ENCODE measurements at regions of chr5 and their contacts with region 1.

Region 1: DNA sequence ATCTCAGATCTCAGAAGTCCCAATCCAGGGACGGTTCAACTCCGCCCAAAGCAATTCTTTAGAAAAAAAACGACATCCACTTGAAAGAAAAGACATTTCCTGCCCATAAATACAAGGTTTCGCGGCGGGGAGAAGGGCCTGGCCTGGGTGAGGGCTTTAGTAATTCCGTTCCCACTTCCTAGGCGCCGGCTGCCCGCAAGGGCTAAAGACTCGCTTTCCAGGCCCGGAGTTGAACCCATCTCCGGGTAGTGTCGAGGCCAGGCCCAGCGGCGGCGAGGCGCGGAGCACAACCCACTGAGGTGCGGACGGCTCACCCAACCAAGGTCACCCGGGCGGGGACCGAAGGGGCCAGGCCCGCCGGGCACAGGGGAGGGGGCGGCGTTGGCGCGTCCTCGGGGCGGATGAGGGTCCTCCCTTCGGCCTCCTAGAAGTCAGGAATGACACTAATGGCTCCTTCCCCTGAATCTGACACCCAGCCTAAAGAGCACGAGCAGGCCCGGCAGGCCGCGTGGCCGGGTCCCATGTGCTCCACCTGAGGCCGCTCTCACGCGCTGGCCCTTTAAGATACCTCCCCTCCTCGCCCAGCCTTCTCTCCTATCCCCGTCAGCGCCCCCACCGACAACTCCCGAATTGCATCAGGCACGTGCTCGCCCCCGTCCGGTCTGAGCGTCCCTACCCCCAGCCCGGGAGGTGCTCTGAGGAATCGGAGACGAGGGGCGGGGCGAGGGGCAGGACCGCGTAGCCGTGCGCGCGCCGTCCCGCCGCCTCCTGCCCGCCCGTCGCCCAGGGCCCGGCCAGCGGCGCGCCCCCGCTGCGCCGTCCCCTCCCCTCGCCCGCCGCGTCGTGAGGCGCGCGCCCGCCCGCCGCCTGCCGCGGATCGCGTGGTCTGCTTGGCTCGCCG is 467 bp upstream of the LARP1 start:
- DNase-seq: peak; percentile 99
- H3K4me3 ChIP-seq: peak overlapping the region; percentile 4 to 91
- H3K4me3 Mint-ChIP-seq: peak overlapping the region; percentile 85 to 92 (median 87)
- H3K27ac ChIP-seq: peak overlapping the region; percentile 92
- H3K27ac Mint-ChIP-seq: peak overlapping the region; percentile 90 to 99 (median 97)
- H3K4me1 ChIP-seq: peaks cover 32% of the 10 kb centered on the region
- H3K4me1 Mint-ChIP-seq: peaks cover 27 to 55% (median 39%) of the 10 kb centered on the region in 4 donors
- H3K27me3 ChIP-seq: no peaks in the 10 kb centered on the region
- H3K27me3 Mint-ChIP-seq: no peaks in the 10 kb centered on the region

Region 2: DNA sequence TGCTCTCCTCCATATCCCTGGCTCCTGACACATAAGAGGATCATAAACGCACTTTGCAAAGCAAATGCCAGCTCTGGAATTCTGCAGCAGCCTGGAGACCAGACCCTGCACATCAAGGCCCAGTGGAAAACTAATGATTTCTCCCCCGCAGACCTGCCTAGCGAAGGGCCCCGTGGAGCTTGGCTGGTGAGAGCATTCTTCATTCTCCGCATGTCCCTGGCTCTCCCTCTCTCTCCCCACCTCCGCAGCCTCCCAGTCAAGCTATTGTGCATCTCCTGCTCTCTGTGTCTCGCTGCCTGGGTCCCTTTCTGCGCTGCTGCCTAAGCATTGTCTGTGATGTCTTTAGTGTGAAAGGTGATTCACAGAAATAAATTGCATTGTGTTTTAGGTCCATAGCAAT is 1217.5 kb before region 1 on chr5:
- CTCF ChIA-PET with region 1: no interaction called
- POLR2A ChIA-PET with region 1: no interaction called
- intact Hi-C with region 1: no loop called
- DNase-seq: no peak
- H3K4me3 ChIP-seq: no peak overlapping the region
- H3K4me3 Mint-ChIP-seq: no peak overlapping the region
- H3K27ac ChIP-seq: no peak overlapping the region
- H3K27ac Mint-ChIP-seq: no peak overlapping the region
- H3K4me1 ChIP-seq: no peaks in the 10 kb centered on the region
- H3K4me1 Mint-ChIP-seq: no peaks in the 10 kb centered on the region
- H3K27me3 ChIP-seq: no peaks in the 10 kb centered on the region
- H3K27me3 Mint-ChIP-seq: no peaks in the 10 kb centered on the region

Region 3: GRCh38 chr5:154445422-154446182 is 309.1 kb before region 1 on chr5 and contains the start of gene SAP30L:
- CTCF ChIA-PET with region 1: no interaction called
- POLR2A ChIA-PET with region 1: no interaction called
- intact Hi-C with region 1: loop called (anchors 1 kb)
- DNase-seq: peak; percentile 93 to 99 (median 96)
- H3K4me3 ChIP-seq: peak within 1 kb of the TSS; percentile 95 to 99
- H3K4me3 Mint-ChIP-seq: peak within 1 kb of the TSS; percentile 97 to 100 (median 99)
- H3K27ac ChIP-seq: peak within 1 kb of the TSS; percentile 66
- H3K27ac Mint-ChIP-seq: peak within 1 kb of the TSS; percentile 83 to 100 (median 96)
- H3K4me1 ChIP-seq: peaks cover 46% of the 10 kb centered on the region
- H3K4me1 Mint-ChIP-seq: peaks cover 40 to 75% (median 52%) of the 10 kb centered on the region in 4 donors
- H3K27me3 ChIP-seq: no peaks in the 10 kb centered on the region
- H3K27me3 Mint-ChIP-seq: no peaks in the 10 kb centered on the region
- total RNA-seq, gene SAP30L: 36.9 to 47.5 TPM

Region 4: GRCh38 chr5:154575546-154576428 is 178.9 kb before region 1 on chr5:
- CTCF ChIA-PET with region 1: no interaction called
- POLR2A ChIA-PET with region 1: no interaction called
- intact Hi-C with region 1: no loop called
- DNase-seq: no peak
- H3K4me3 ChIP-seq: no peak overlapping the region
- H3K4me3 Mint-ChIP-seq: no peak overlapping the region
- H3K27ac ChIP-seq: no peak overlapping the region
- H3K27ac Mint-ChIP-seq: no peak overlapping the region
- H3K4me1 ChIP-seq: no peaks in the 10 kb centered on the region
- H3K4me1 Mint-ChIP-seq: peaks cover 0 to 2% (median 0%) of the 10 kb centered on the region in 4 donors
- H3K27me3 ChIP-seq: peaks cover 3% of the 10 kb centered on the region
- H3K27me3 Mint-ChIP-seq: peaks cover 23 to 26% of the 10 kb centered on the region in 2 donors

Region 5: GRCh38 chr5:154654486-154655371 is 100.0 kb before region 1 on chr5:
- CTCF ChIA-PET with region 1: no interaction called
- POLR2A ChIA-PET with region 1: no interaction called
- intact Hi-C with region 1: loop called (anchors 5 kb)
- DNase-seq: no peak
- H3K4me3 ChIP-seq: no peak overlapping the region
- H3K4me3 Mint-ChIP-seq: peak overlapping the region in 1 of 8 donors; percentile 39
- H3K27ac ChIP-seq: no peak overlapping the region
- H3K27ac Mint-ChIP-seq: peak overlapping the region in 3 of 7 donors; percentile 50 to 55 (median 50)
- H3K4me1 ChIP-seq: no peaks in the 10 kb centered on the region
- H3K4me1 Mint-ChIP-seq: peaks cover 2 to 5% (median 4%) of the 10 kb centered on the region in 4 donors
- H3K27me3 ChIP-seq: no peaks in the 10 kb centered on the region
- H3K27me3 Mint-ChIP-seq: no peaks in the 10 kb centered on the region

Region 6: GRCh38 chr5:154683101-154683880 is 71.4 kb before region 1 on chr5:
- CTCF ChIA-PET with region 1: no interaction called
- POLR2A ChIA-PET with region 1: no interaction called
- intact Hi-C with region 1: loop called (anchors 1 kb)
- DNase-seq: no peak
- H3K4me3 ChIP-seq: peak overlapping the region in 1 of 2 donors; percentile 58
- H3K4me3 Mint-ChIP-seq: peak overlapping the region; percentile 55 to 78 (median 70)
- H3K27ac ChIP-seq: no peak overlapping the region
- H3K27ac Mint-ChIP-seq: peak overlapping the region in 5 of 7 donors; percentile 7 to 72 (median 24)
- H3K4me1 ChIP-seq: peaks cover 7% of the 10 kb centered on the region
- H3K4me1 Mint-ChIP-seq: peaks cover 3 to 7% (median 5%) of the 10 kb centered on the region in 4 donors
- H3K27me3 ChIP-seq: no peaks in the 10 kb centered on the region
- H3K27me3 Mint-ChIP-seq: peaks cover 0 to 2% of the 10 kb centered on the region in 2 donors

Region 7: GRCh38 chr5:154811653-154812365 is 57.1 kb after region 1 on chr5:
- CTCF ChIA-PET with region 1: no interaction called
- POLR2A ChIA-PET with region 1: interaction called, 3 read pairs
- intact Hi-C with region 1: loop called (anchors 1 kb)
- DNase-seq: peak; percentile 58 to 66 (median 62)
- H3K4me3 ChIP-seq: no peak overlapping the region
- H3K4me3 Mint-ChIP-seq: peak overlapping the region in 1 of 8 donors; percentile 16
- H3K27ac ChIP-seq: no peak overlapping the region
- H3K27ac Mint-ChIP-seq: peak overlapping the region in 4 of 7 donors; percentile 9 to 91 (median 46)
- H3K4me1 ChIP-seq: peaks cover 15% of the 10 kb centered on the region
- H3K4me1 Mint-ChIP-seq: peaks cover 14 to 37% (median 21%) of the 10 kb centered on the region in 4 donors
- H3K27me3 ChIP-seq: no peaks in the 10 kb centered on the region
- H3K27me3 Mint-ChIP-seq: no peaks in the 10 kb centered on the region

Region 8: DNA sequence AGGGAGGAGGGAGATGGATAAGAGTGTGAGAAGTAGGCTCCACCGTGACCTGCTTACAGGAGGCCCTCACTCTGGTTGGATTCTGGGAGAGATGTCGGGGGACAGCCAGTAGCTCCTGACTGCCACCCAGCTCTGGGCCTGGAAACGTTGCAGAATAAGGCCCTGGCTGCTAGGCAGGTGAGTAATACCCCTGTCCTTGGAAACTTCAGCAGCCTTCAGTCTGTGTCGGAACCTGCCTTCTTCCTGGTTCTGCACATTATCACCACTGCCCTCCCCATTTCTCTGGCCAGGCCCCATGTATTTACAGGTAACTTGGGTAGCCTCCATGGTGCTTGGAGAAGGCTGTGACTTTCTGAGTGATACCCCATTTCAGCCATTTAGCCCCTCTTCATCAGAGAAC is 68.9 kb after region 1 on chr5:
- CTCF ChIA-PET with region 1: no interaction called
- POLR2A ChIA-PET with region 1: no interaction called
- intact Hi-C with region 1: no loop called
- DNase-seq: no peak
- H3K4me3 ChIP-seq: no peak overlapping the region
- H3K4me3 Mint-ChIP-seq: no peak overlapping the region
- H3K27ac ChIP-seq: no peak overlapping the region
- H3K27ac Mint-ChIP-seq: peak overlapping the region in 1 of 7 donors; percentile 31
- H3K4me1 ChIP-seq: peaks cover 12% of the 10 kb centered on the region
- H3K4me1 Mint-ChIP-seq: peaks cover 12 to 25% (median 20%) of the 10 kb centered on the region in 4 donors
- H3K27me3 ChIP-seq: no peaks in the 10 kb centered on the region
- H3K27me3 Mint-ChIP-seq: no peaks in the 10 kb centered on the region

Region 9: DNA sequence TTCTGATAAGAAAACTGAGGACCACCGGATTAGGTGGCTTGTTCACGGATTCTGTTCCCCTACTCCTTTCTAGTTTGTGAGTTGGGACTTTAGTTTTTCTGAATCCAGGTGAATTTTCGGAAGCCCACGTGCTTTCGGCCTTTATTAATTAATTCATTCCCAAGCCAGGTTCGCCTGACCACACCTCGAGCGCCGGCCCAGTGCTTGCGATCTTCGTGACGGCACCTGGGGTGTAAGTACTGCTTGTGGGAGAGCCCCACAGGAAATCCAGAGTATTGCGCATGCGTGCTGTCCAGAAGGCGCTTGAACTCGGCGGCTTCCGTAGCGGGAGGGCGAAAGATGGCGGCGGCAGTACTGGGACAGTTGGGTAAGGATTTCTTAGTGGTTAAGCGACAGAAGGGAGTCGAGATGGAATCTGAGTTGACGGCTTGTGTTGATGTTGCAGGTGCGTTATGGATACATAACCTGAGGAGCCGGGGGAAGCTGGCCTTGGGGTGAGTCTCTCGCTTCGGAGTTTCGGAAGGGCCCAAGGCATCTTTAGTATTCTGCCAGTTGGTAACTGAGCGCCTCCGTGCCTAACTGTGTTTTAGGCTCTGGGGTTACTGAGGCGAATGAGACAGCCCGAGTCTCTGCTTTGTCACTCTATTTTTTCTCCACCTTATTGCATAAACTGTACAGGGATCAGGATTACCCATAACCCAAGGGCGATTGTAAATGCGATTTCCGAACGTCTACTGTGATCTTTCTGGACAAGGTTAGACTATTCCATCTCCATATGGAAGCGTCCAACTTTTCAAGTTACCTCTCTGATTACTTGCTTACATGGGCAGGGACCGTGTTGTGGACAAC is 186.3 kb after region 1 on chr5 and contains the start of gene MRPL22:
- CTCF ChIA-PET with region 1: no interaction called
- POLR2A ChIA-PET with region 1: interaction called, 5 read pairs
- intact Hi-C with region 1: loop called (anchors 1 kb)
- DNase-seq: peak; percentile 93 to 97 (median 94)
- H3K4me3 ChIP-seq: peak within 1 kb of the TSS; percentile 67 to 81
- H3K4me3 Mint-ChIP-seq: peak within 1 kb of the TSS; percentile 97 to 100 (median 98)
- H3K27ac ChIP-seq: peak within 1 kb of the TSS; percentile 69
- H3K27ac Mint-ChIP-seq: peak within 1 kb of the TSS; percentile 97 to 100 (median 98)
- H3K4me1 ChIP-seq: peaks cover 38% of the 10 kb centered on the region
- H3K4me1 Mint-ChIP-seq: peaks cover 29 to 60% (median 44%) of the 10 kb centered on the region in 4 donors
- H3K27me3 ChIP-seq: no peaks in the 10 kb centered on the region
- H3K27me3 Mint-ChIP-seq: no peaks in the 10 kb centered on the region
- total RNA-seq, gene MRPL22: 28.0 to 33.1 TPM

Measured in CD4-positive, alpha-beta memory T cell (primary cell).